ENCODE measurements at regions of chr6 and their contacts with region 1.

Region 1: GRCh38 chr6:127606131-127606562 is 29.2 kb downstream of the C6orf58 start:
- DNase-seq: peak in 5 of 9 donors; percentile 7 to 30 (median 22)
- ATAC-seq: no peak
- H3K4me3 ChIP-seq: no peak overlapping the region
- H3K4me3 Mint-ChIP-seq: no peak overlapping the region
- H3K27ac ChIP-seq: no peak overlapping the region
- H3K27ac Mint-ChIP-seq: no peak overlapping the region
- H3K4me1 ChIP-seq: no peaks in the 10 kb centered on the region
- H3K4me1 Mint-ChIP-seq: no peaks in the 10 kb centered on the region
- H3K27me3 ChIP-seq: no peaks in the 10 kb centered on the region
- H3K27me3 Mint-ChIP-seq: peaks cover 0 to 14% (median 4%) of the 10 kb centered on the region in 5 donors

Region 2: GRCh38 chr6:128327890-128328289 is 721.7 kb after region 1 on chr6:
- CTCF ChIA-PET with region 1: no interaction called
- POLR2A ChIA-PET with region 1: no interaction called
- intact Hi-C with region 1: loop called (anchors 5 kb)
- DNase-seq: peak in 7 of 9 donors; percentile 13 to 37 (median 27)
- ATAC-seq: peak; percentile 76
- H3K4me3 ChIP-seq: no peak overlapping the region
- H3K4me3 Mint-ChIP-seq: no peak overlapping the region
- H3K27ac ChIP-seq: no peak overlapping the region
- H3K27ac Mint-ChIP-seq: no peak overlapping the region
- H3K4me1 ChIP-seq: no peaks in the 10 kb centered on the region
- H3K4me1 Mint-ChIP-seq: peaks cover 0 to 6% (median 0%) of the 10 kb centered on the region in 7 donors
- H3K27me3 ChIP-seq: no peaks in the 10 kb centered on the region
- H3K27me3 Mint-ChIP-seq: peaks cover 0 to 3% (median 0%) of the 10 kb centered on the region in 5 donors

Region 3: GRCh38 chr6:128520436-128521281 is 914.5 kb after region 1 on chr6 and contains the start of gene PTPRK:
- CTCF ChIA-PET with region 1: no interaction called
- POLR2A ChIA-PET with region 1: no interaction called
- intact Hi-C with region 1: loop called in 1 of 2 experiments (anchors 1 kb)
- DNase-seq: peak; percentile 70 to 90 (median 87)
- ATAC-seq: peak; percentile 95
- H3K4me3 ChIP-seq: peak within 1 kb of the TSS; percentile 77
- H3K4me3 Mint-ChIP-seq: peak within 1 kb of the TSS; percentile 90 to 98 (median 94)
- H3K27ac ChIP-seq: peak within 1 kb of the TSS; percentile 59
- H3K27ac Mint-ChIP-seq: peak within 1 kb of the TSS; percentile 73 to 94 (median 82)
- H3K4me1 ChIP-seq: peaks cover 5 to 17% of the 10 kb centered on the region in 2 donors
- H3K4me1 Mint-ChIP-seq: peaks cover 8 to 22% (median 14%) of the 10 kb centered on the region in 7 donors
- H3K27me3 ChIP-seq: no peaks in the 10 kb centered on the region
- H3K27me3 Mint-ChIP-seq: peaks cover 52 to 89% (median 68%) of the 10 kb centered on the region in 5 donors
- total RNA-seq, gene PTPRK: 1.6 to 6.5 (median 3.9) TPM

Region 4: DNA sequence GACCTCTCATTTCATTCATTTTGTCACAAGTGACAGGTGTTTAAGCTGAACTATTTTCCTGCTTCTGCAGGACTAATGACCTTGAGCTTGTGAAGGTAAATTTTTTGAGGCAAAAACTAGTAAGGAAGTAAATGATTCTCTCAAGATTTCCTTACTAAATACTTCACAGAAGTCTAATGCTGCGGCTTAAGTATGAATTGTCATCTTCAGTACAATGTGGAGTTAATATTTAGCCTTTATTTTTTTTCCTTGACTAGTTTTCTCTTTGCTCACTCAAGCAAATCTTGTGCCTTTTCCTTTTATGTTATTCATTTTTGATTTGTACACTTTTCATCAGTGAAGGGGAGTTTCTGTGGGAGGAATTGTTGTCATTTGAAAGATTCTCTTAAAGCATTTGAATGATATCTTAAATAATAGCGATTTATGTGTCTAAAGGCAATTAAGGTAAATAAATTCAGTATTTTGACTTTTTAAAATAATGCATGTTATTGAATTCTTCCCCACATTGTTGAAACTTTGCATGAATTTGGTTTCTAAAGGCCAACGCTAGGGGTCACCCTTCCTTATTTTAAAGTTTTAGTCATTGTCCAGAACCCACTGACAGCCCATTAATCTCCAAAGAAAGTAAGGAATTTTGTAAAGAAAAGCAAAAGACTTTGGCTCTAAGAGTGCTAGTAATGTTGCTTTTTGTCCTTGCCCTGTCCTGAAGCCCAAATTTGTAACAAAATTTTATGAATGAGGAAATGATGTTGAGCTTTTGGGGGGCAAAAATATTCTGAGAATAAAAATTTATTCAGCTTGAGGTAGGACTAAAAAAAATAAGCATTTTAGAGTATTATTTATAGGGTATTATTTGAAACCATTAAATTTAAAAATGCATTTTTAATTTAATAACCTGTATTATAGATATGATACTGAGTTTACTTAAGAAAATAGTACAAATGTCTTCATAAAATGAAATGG is 1119.4 kb after region 1 on chr6:
- CTCF ChIA-PET with region 1: no interaction called
- POLR2A ChIA-PET with region 1: no interaction called
- intact Hi-C with region 1: loop called in 1 of 2 experiments (anchors 10 kb)
- DNase-seq: peak in 3 of 9 donors; percentile 4 to 7 (median 7)
- ATAC-seq: no peak
- H3K4me3 ChIP-seq: no peak overlapping the region
- H3K4me3 Mint-ChIP-seq: no peak overlapping the region
- H3K27ac ChIP-seq: no peak overlapping the region
- H3K27ac Mint-ChIP-seq: no peak overlapping the region
- H3K4me1 ChIP-seq: no peaks in the 10 kb centered on the region
- H3K4me1 Mint-ChIP-seq: no peaks in the 10 kb centered on the region
- H3K27me3 ChIP-seq: no peaks in the 10 kb centered on the region
- H3K27me3 Mint-ChIP-seq: peaks cover 9 to 28% (median 21%) of the 10 kb centered on the region in 5 donors

Region 5: GRCh38 chr6:128731249-128732165 is 1125.4 kb after region 1 on chr6:
- CTCF ChIA-PET with region 1: no interaction called
- POLR2A ChIA-PET with region 1: no interaction called
- intact Hi-C with region 1: loop called (anchors 1 to 10 kb)
- DNase-seq: peak in 4 of 9 donors; percentile 4 to 14 (median 7)
- ATAC-seq: no peak
- H3K4me3 ChIP-seq: no peak overlapping the region
- H3K4me3 Mint-ChIP-seq: no peak overlapping the region
- H3K27ac ChIP-seq: no peak overlapping the region
- H3K27ac Mint-ChIP-seq: no peak overlapping the region
- H3K4me1 ChIP-seq: no peaks in the 10 kb centered on the region
- H3K4me1 Mint-ChIP-seq: no peaks in the 10 kb centered on the region
- H3K27me3 ChIP-seq: peaks cover 0 to 3% of the 10 kb centered on the region in 2 donors
- H3K27me3 Mint-ChIP-seq: peaks cover 0 to 24% (median 11%) of the 10 kb centered on the region in 5 donors

Region 6: DNA sequence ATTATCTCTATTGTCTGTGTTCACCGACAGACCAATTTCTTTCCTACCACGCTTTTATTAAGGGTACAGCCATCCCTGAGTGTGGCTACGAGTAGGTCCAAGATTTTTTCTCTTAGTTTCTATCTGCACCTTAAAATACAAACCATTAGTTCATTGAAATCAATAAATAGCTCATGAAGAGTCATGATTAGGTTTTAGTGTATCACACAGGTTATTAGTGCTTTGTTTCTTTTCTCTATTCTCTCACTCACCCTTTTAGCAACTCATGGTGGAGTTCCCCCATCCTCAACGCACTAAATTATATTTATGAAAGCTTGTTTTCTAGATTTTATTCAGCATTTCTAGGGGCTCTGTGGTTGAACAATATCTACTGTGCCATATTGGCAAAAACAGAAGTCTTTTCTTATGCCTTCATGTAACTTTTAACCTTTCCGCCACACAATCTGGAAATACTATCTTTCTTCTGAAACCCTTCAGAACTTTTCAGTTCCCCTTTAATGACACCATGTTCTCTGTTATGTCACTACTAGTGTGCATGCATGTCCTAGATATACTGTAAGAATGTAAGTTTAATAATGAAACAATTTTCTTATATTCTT is 1148.6 kb after region 1 on chr6:
- CTCF ChIA-PET with region 1: no interaction called
- POLR2A ChIA-PET with region 1: no interaction called
- intact Hi-C with region 1: no loop called
- DNase-seq: no peak
- ATAC-seq: no peak
- H3K4me3 ChIP-seq: no peak overlapping the region
- H3K4me3 Mint-ChIP-seq: no peak overlapping the region
- H3K27ac ChIP-seq: no peak overlapping the region
- H3K27ac Mint-ChIP-seq: no peak overlapping the region
- H3K4me1 ChIP-seq: no peaks in the 10 kb centered on the region
- H3K4me1 Mint-ChIP-seq: no peaks in the 10 kb centered on the region
- H3K27me3 ChIP-seq: no peaks in the 10 kb centered on the region
- H3K27me3 Mint-ChIP-seq: peaks cover 3 to 12% (median 12%) of the 10 kb centered on the region in 5 donors

Region 7: GRCh38 chr6:129370268-129370916 is 1764.2 kb after region 1 on chr6:
- CTCF ChIA-PET with region 1: interaction called, 3 read pairs
- POLR2A ChIA-PET with region 1: no interaction called
- intact Hi-C with region 1: loop called in 1 of 2 experiments (anchors 2 kb)
- DNase-seq: peak in 7 of 9 donors; percentile 3 to 42 (median 29)
- ATAC-seq: peak; percentile 44
- H3K4me3 ChIP-seq: no peak overlapping the region
- H3K4me3 Mint-ChIP-seq: peak overlapping the region in 6 of 10 donors; percentile 13 to 65 (median 55)
- H3K27ac ChIP-seq: no peak overlapping the region
- H3K27ac Mint-ChIP-seq: no peak overlapping the region
- H3K4me1 ChIP-seq: peaks cover 0 to 5% of the 10 kb centered on the region in 2 donors
- H3K4me1 Mint-ChIP-seq: peaks cover 0 to 17% (median 9%) of the 10 kb centered on the region in 7 donors
- H3K27me3 ChIP-seq: no peaks in the 10 kb centered on the region
- H3K27me3 Mint-ChIP-seq: peaks cover 0 to 2% (median 0%) of the 10 kb centered on the region in 5 donors